ENCODE measurements at regions of chr5 and their contacts with region 1.

Region 1: GRCh38 chr5:53170748-53171349 is 61.3 kb upstream of the MOCS2 start:
- DNase-seq: no peak
- H3K4me3 ChIP-seq: no peak overlapping the region
- H3K27ac ChIP-seq: no peak overlapping the region
- H3K4me1 ChIP-seq: no peaks in the 10 kb centered on the region
- H3K27me3 ChIP-seq: no peaks in the 10 kb centered on the region
- CTCF ChIP-seq: peak in 6 of 11 experiments; percentile 22 to 58 (median 38)
- POLR2A ChIP-seq: no peak

Region 2: GRCh38 chr5:53023969-53024368 is 146.9 kb before region 1 on chr5:
- intact Hi-C with region 1: no loop called
- DNase-seq: no peak
- H3K4me3 ChIP-seq: no peak overlapping the region
- H3K27ac ChIP-seq: peak overlapping the region in 3 of 8 donors; percentile 12 to 46 (median 25)
- H3K4me1 ChIP-seq: peaks cover 0 to 41% (median 15%) of the 10 kb centered on the region in 6 donors
- H3K27me3 ChIP-seq: peaks cover 0 to 4% (median 0%) of the 10 kb centered on the region in 7 donors
- CTCF ChIP-seq: no peak
- POLR2A ChIP-seq: no peak

Region 3: GRCh38 chr5:54229041-54229780 is 1058.4 kb after region 1 on chr5:
- intact Hi-C with region 1: loop called (anchors 10 kb)
- DNase-seq: peak; percentile 89
- H3K4me3 ChIP-seq: no peak overlapping the region
- H3K27ac ChIP-seq: no peak overlapping the region
- H3K4me1 ChIP-seq: peaks cover 0 to 31% (median 9%) of the 10 kb centered on the region in 6 donors
- H3K27me3 ChIP-seq: no peaks in the 10 kb centered on the region
- CTCF ChIP-seq: peak; percentile 72 to 93 (median 86)
- POLR2A ChIP-seq: no peak

Measured in spleen (tissue), 13 donors.